Naive thymus-derived CD8-positive, alpha-beta T cell (primary cell): ENCODE measurements at regions of chr20 and their contacts with region 1.

Region 1: GRCh38 chr20:1669304-1669703 is 11.7 kb upstream of the SIRPG start:
- DNase-seq: no peak
- ATAC-seq: no peak
- H3K4me3 Mint-ChIP-seq: peak overlapping the region in 4 of 10 donors; percentile 5 to 63 (median 32)
- H3K27ac Mint-ChIP-seq: peak overlapping the region; percentile 83 to 99 (median 90)
- H3K4me1 Mint-ChIP-seq: peaks cover 53 to 98% (median 97%) of the 10 kb centered on the region in 4 donors
- H3K27me3 Mint-ChIP-seq: no peaks in the 10 kb centered on the region

Region 2: GRCh38 chr20:1450926-1451491 is 218.3 kb before region 1 on chr20:
- POLR2A ChIA-PET with region 1: no interaction called
- DNase-seq: no peak
- ATAC-seq: no peak
- H3K4me3 Mint-ChIP-seq: no peak overlapping the region
- H3K27ac Mint-ChIP-seq: no peak overlapping the region
- H3K4me1 Mint-ChIP-seq: peaks cover 0 to 2% (median 0%) of the 10 kb centered on the region in 4 donors
- H3K27me3 Mint-ChIP-seq: no peaks in the 10 kb centered on the region

Region 3: GRCh38 chr20:1685304-1686052 is 16.2 kb after region 1 on chr20:
- POLR2A ChIA-PET with region 1: interaction called, 60 read pairs
- DNase-seq: no peak
- ATAC-seq: peak; percentile 65 to 69
- H3K4me3 Mint-ChIP-seq: peak overlapping the region; percentile 90 to 98 (median 92)
- H3K27ac Mint-ChIP-seq: peak overlapping the region; percentile 88 to 97 (median 95)
- H3K4me1 Mint-ChIP-seq: peaks cover 36 to 86% (median 61%) of the 10 kb centered on the region in 4 donors
- H3K27me3 Mint-ChIP-seq: no peaks in the 10 kb centered on the region